ENCODE measurements at regions of chr5 and their contacts with region 1.

Region 1: GRCh38 chr5:122959740-122960445 is 76.6 kb downstream of the PPIC start:
- DNase-seq: no peak
- H3K4me3 ChIP-seq: no peak overlapping the region
- H3K27ac ChIP-seq: no peak overlapping the region
- H3K4me1 ChIP-seq: peaks cover 2% of the 10 kb centered on the region
- H3K27me3 ChIP-seq: no peaks in the 10 kb centered on the region
- CTCF ChIP-seq: no peak
- EP300 ChIP-seq: no peak
- POLR2A ChIP-seq: no peak

Region 2: GRCh38 chr5:121624035-121624434 is 1335.9 kb before region 1 on chr5:
- intact Hi-C with region 1: loop called in 1 of 4 experiments (anchors 5 kb)
- DNase-seq: no peak
- H3K4me3 ChIP-seq: no peak overlapping the region
- H3K27ac ChIP-seq: no peak overlapping the region
- H3K4me1 ChIP-seq: no peaks in the 10 kb centered on the region
- H3K27me3 ChIP-seq: no peaks in the 10 kb centered on the region
- CTCF ChIP-seq: no peak
- EP300 ChIP-seq: no peak
- POLR2A ChIP-seq: no peak

Region 3: GRCh38 chr5:122220511-122220910 is 739.4 kb before region 1 on chr5:
- intact Hi-C with region 1: no loop called
- DNase-seq: no peak
- H3K4me3 ChIP-seq: no peak overlapping the region
- H3K27ac ChIP-seq: no peak overlapping the region
- H3K4me1 ChIP-seq: no peaks in the 10 kb centered on the region
- H3K27me3 ChIP-seq: no peaks in the 10 kb centered on the region
- CTCF ChIP-seq: no peak
- EP300 ChIP-seq: no peak
- POLR2A ChIP-seq: no peak

Measured in ovary (tissue), 10 donors.